Activated CD8-positive, alpha-beta memory T cell treated with anti-CD3 and anti-CD28 coated beads, Interleukin-2, amount 10 ng/mL, durations not matched to agents 7 days and 5 days (primary cell): ENCODE measurements at regions of chr11 and their contacts with region 1.

Region 1: DNA sequence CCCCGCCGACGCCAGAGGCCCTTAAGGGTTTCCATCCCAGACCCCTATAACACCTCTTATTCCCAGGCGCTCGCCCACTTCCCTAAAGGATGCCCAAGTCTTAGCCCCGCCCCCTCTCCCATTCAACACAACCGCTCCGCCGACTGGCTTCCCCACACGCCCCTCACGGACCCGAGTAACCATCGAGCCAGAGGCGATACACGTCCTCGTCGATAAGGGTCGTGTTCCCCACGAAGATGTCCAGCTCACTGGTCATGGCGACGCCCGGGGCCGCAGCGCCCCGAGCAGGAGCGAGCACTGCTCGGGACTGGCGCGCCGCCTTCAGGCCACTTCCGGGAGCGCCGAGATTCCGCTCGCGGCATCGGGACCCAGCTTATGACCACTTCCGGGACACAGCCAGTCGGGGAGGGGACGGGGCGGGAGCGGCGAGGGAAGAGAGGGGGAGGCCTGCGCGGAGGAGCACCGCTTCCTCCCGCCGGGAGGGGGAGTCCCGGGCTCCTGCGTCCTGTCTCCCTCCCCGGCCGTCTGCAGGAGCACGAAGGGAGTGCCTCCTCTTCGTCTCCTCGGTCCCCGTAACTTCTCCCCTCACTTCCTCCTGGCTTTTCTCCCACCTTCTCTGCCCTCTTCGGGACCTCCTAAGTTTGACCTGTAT is at the start of gene FIBP:
- DNase-seq: peak; percentile 98
- ATAC-seq: peak; percentile 63
- H3K4me3 Mint-ChIP-seq: peak within 1 kb of the TSS; percentile 96
- H3K27ac Mint-ChIP-seq: peak within 1 kb of the TSS; percentile 95
- H3K4me1 Mint-ChIP-seq: peaks cover 68% of the 10 kb centered on the region
- H3K27me3 Mint-ChIP-seq: no peaks in the 10 kb centered on the region
- total RNA-seq, gene FIBP: 100 to 122 TPM

Region 2: DNA sequence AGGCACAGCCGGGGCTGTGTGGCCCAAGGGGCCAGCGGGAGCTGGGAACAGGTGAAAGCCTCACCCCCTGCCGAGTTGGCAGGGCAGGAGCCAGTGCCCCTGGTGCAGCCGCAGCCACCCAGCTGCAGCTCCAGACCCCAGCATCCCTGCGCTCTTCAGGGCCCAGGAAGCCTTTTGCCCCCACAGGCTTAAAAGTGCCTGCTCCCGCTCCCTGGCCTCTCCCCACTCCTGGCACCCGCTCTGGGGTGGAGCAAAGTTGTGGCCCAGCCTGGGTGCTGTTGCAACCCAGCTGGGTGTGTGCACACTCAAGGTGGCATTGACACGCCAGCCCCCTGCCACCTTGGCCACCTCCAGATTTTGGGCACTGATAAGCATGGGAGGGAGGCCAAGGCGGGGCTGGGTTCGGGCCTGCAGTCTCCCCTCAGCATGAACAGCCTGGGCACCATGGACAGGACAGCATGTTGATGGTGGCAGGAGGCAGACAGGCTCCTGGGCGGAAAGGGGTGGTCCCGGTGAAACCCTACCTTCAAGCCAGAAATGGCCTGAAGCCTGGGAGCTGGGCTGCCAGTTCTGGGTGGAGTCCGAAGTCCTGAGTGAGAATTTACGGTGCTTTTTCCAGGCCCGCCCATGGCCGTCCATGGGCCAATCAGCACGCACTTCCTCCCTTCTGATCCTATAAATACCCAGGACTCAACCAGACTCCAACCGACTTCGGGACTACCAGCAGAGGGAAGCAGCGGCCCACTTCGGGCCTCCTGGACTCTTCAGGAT is 144.2 kb before region 1 on chr11:
- CTCF ChIA-PET with region 1: no interaction called
- DNase-seq: no peak
- ATAC-seq: no peak
- H3K4me3 Mint-ChIP-seq: no peak overlapping the region
- H3K27ac Mint-ChIP-seq: no peak overlapping the region
- H3K4me1 Mint-ChIP-seq: no peaks in the 10 kb centered on the region
- H3K27me3 Mint-ChIP-seq: peaks cover 40% of the 10 kb centered on the region

Region 3: GRCh38 chr11:65817835-65818742 is 70.2 kb before region 1 on chr11:
- CTCF ChIA-PET with region 1: interaction called, 16 read pairs
- DNase-seq: peak; percentile 95
- ATAC-seq: peak; percentile 91
- H3K4me3 Mint-ChIP-seq: peak overlapping the region; percentile 75
- H3K27ac Mint-ChIP-seq: peak overlapping the region; percentile 70
- H3K4me1 Mint-ChIP-seq: peaks cover 18% of the 10 kb centered on the region
- H3K27me3 Mint-ChIP-seq: peaks cover 4% of the 10 kb centered on the region

Region 4: GRCh38 chr11:65850831-65851811 is 37.2 kb before region 1 on chr11:
- CTCF ChIA-PET with region 1: interaction called, 710 read pairs
- DNase-seq: peak; percentile 52
- ATAC-seq: peak; percentile 10
- H3K4me3 Mint-ChIP-seq: no peak overlapping the region
- H3K27ac Mint-ChIP-seq: no peak overlapping the region
- H3K4me1 Mint-ChIP-seq: peaks cover 22% of the 10 kb centered on the region
- H3K27me3 Mint-ChIP-seq: no peaks in the 10 kb centered on the region

Region 5: GRCh38 chr11:65906602-65907001 is 18.3 kb after region 1 on chr11:
- CTCF ChIA-PET with region 1: interaction called, 197 read pairs
- DNase-seq: no peak
- ATAC-seq: no peak
- H3K4me3 Mint-ChIP-seq: no peak overlapping the region
- H3K27ac Mint-ChIP-seq: no peak overlapping the region
- H3K4me1 Mint-ChIP-seq: peaks cover 30% of the 10 kb centered on the region
- H3K27me3 Mint-ChIP-seq: peaks cover 7% of the 10 kb centered on the region

Region 6: DNA sequence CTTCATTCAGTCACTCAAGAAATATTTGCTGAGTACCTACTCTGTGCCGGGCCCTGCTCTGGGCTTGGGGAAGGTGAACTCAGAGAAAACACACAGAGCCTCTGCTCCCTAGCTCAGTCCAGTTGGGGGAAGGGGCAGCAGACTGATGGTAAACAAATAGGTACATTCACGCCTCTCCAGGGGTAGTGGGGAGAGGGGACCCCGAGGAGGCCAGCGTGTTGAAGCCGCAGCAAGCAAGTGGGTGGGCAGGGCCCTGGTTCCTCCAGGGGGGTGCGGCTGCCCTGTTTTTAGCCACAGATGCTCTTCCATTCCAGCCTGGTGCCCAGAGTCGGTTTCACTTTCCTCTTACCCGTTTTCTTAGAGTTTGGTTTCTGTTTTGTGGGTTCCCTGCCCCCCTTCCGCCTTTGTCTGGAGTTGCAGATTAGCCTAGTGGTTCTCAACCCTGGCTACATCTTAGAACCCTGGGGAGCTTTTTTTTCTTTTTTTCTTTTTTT is 39.7 kb after region 1 on chr11:
- CTCF ChIA-PET with region 1: interaction called, 30 read pairs
- DNase-seq: peak; percentile 93
- ATAC-seq: peak; percentile 89
- H3K4me3 Mint-ChIP-seq: peak overlapping the region; percentile 71
- H3K27ac Mint-ChIP-seq: peak overlapping the region; percentile 99
- H3K4me1 Mint-ChIP-seq: peaks cover 55% of the 10 kb centered on the region
- H3K27me3 Mint-ChIP-seq: no peaks in the 10 kb centered on the region

Region 7: DNA sequence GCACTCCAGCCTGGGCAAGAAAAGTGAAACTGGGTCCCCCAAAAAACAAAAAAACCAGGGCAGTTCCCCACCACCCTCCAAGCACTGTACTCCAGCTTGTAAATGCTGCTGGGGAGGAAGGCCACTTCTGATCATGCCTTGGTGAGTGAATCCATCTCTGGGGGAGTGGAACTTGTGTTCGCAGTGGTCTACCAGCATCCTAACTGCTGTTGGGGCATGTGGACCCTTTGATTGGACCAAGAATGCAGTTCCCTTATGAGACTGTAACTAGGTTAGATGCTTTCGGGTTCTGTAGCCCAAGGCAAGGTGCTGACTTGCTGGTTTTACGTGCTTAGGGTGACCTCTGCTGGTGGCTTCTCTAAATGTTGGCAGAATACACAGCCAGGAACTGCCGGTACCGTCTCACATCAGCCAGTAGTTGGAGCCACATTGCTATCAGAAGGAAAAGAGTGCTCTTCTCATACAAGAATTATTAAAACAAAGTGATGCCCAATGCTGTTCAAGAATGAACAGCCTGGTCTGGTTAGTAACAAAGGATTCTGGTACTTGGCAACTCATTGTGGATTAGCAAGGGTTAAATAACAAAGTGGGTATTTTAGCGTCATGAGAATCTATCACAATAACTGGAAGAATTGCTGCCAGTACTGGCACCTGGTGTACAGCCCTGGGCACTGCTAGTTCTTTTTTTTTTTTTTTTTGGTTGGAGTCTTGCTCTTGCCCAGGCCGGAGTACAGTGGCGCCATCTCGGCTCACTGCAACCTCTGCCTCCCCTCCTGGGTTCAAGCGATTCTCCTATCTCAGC is 100.7 kb after region 1 on chr11:
- CTCF ChIA-PET with region 1: interaction called, 221 read pairs
- DNase-seq: peak; percentile 96
- ATAC-seq: peak; percentile 100
- H3K4me3 Mint-ChIP-seq: no peak overlapping the region
- H3K27ac Mint-ChIP-seq: peak overlapping the region; percentile 80
- H3K4me1 Mint-ChIP-seq: peaks cover 8% of the 10 kb centered on the region
- H3K27me3 Mint-ChIP-seq: no peaks in the 10 kb centered on the region